ENCODE measurements at regions of chr17 and their contacts with region 1.

Region 1: GRCh38 chr17:29807520-29808351 is 122.3 kb downstream of the SSH2 start:
- DNase-seq: peak; percentile 65 to 82 (median 78)
- H3K4me3 ChIP-seq: no peak overlapping the region
- H3K27ac ChIP-seq: no peak overlapping the region
- H3K4me1 ChIP-seq: peaks cover 0 to 7% (median 3%) of the 10 kb centered on the region in 4 experiments
- H3K27me3 ChIP-seq: no peaks in the 10 kb centered on the region

Region 2: DNA sequence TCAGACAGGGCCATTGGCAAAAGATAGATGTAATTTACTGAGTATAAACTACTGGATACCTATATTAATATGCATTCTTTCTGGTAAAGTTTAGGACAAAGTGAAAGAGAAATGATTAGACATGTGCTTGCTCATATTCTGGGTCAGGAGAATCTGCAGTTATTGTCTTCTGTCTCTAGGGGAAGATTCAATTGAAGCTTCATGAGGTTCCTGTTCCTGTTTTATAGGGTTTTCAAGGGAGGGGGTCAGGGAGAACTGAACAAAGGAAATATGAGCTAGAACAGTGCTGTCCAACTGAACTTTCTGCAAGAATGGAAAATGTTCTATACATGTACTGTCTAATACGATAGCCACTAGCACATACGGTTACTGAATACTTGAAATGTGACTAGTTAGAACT is 125.7 kb before region 1 on chr17:
- CTCF ChIA-PET with region 1: no interaction called
- POLR2A ChIA-PET with region 1: no interaction called
- DNase-seq: peak; percentile 51 to 84 (median 79)
- H3K4me3 ChIP-seq: no peak overlapping the region
- H3K27ac ChIP-seq: peak overlapping the region in 1 of 2 experiments; percentile 17
- H3K4me1 ChIP-seq: peaks cover 23 to 42% (median 33%) of the 10 kb centered on the region in 4 experiments
- H3K27me3 ChIP-seq: no peaks in the 10 kb centered on the region

Region 3: GRCh38 chr17:29732613-29733012 is 75.1 kb before region 1 on chr17:
- CTCF ChIA-PET with region 1: no interaction called
- POLR2A ChIA-PET with region 1: no interaction called
- DNase-seq: no peak
- H3K4me3 ChIP-seq: no peak overlapping the region
- H3K27ac ChIP-seq: no peak overlapping the region
- H3K4me1 ChIP-seq: peaks cover 5 to 17% (median 8%) of the 10 kb centered on the region in 4 experiments
- H3K27me3 ChIP-seq: no peaks in the 10 kb centered on the region

Region 4: GRCh38 chr17:29821897-29822296 is 14.2 kb after region 1 on chr17:
- CTCF ChIA-PET with region 1: interaction called, 20 read pairs
- POLR2A ChIA-PET with region 1: no interaction called
- DNase-seq: no peak
- H3K4me3 ChIP-seq: no peak overlapping the region
- H3K27ac ChIP-seq: no peak overlapping the region
- H3K4me1 ChIP-seq: no peaks in the 10 kb centered on the region
- H3K27me3 ChIP-seq: no peaks in the 10 kb centered on the region

Region 5: DNA sequence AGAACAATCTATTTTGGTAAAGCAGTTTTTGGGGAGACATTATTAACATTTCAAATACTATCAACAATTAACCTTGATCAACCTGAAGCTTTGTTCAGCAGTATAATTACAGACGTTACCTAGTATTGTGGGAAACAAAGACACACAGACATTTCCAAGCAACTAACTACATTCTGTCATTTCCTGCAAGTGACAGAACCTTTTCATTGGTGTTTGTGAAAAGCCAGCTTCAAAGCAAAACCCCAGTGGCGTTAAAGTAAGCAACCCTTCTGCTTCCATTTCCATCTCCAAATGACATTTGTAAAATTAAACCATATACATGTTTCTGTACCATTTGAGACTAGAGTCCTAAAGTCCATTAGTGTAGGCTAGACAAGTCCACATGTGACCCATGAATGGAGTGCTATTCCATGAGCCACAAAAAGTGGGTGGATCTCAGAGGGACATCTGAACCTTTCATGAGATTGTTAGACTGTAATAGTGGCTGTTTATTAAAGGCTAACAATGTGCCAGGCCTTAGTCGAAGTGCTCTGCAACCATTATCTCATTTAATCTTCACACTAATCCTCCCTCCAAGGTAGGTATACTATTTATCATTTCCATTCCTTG is 21.0 kb after region 1 on chr17:
- CTCF ChIA-PET with region 1: interaction called, 11 read pairs
- POLR2A ChIA-PET with region 1: no interaction called
- DNase-seq: no peak
- H3K4me3 ChIP-seq: no peak overlapping the region
- H3K27ac ChIP-seq: no peak overlapping the region
- H3K4me1 ChIP-seq: peaks cover 0 to 6% (median 0%) of the 10 kb centered on the region in 4 experiments
- H3K27me3 ChIP-seq: no peaks in the 10 kb centered on the region

Region 6: DNA sequence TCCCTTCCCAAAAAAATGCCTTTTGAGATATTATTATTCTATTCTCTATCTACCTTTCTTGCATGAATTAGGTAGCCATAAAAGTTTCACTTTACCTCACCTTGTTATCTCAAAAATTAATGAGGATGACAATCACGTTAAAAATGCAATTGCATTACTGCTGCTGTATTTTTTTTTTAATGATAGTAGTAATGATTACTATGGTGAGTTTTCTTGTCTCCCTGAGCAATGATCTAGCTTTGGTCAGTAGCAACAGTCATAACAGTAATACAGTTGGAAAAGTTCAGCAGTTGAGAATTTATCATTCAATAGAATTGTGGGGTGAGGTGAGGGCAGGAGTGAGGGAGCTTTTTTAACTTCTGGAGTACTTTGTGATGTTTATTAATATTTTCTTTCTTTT is 133.6 kb after region 1 on chr17 and contains the start of gene EFCAB5:
- CTCF ChIA-PET with region 1: interaction called, 163 read pairs
- POLR2A ChIA-PET with region 1: no interaction called
- DNase-seq: no peak
- H3K4me3 ChIP-seq: no peak within 1 kb of the TSS
- H3K27ac ChIP-seq: no peak within 1 kb of the TSS
- H3K4me1 ChIP-seq: no peaks in the 10 kb centered on the region
- H3K27me3 ChIP-seq: no peaks in the 10 kb centered on the region

Measured in common myeloid progenitor, CD34-positive (primary cell).